ENCODE measurements at regions of chr3 and their contacts with region 1.

Region 1: GRCh38 chr3:156509189-156510174 is 45.4 kb downstream of the SSR3 start:
- DNase-seq: peak in 3 of 14 experiments; percentile 70 to 73 (median 72)
- ATAC-seq: peak; percentile 94
- H3K4me3 ChIP-seq: no peak overlapping the region
- H3K4me3 Mint-ChIP-seq: no peak overlapping the region
- H3K27ac ChIP-seq: no peak overlapping the region
- H3K27ac Mint-ChIP-seq: no peak overlapping the region
- H3K4me1 ChIP-seq: no peaks in the 10 kb centered on the region
- H3K4me1 Mint-ChIP-seq: no peaks in the 10 kb centered on the region
- H3K27me3 ChIP-seq: no peaks in the 10 kb centered on the region
- H3K27me3 Mint-ChIP-seq: peaks cover 22% of the 10 kb centered on the region
- CTCF ChIP-seq: peak; percentile 69

Region 2: DNA sequence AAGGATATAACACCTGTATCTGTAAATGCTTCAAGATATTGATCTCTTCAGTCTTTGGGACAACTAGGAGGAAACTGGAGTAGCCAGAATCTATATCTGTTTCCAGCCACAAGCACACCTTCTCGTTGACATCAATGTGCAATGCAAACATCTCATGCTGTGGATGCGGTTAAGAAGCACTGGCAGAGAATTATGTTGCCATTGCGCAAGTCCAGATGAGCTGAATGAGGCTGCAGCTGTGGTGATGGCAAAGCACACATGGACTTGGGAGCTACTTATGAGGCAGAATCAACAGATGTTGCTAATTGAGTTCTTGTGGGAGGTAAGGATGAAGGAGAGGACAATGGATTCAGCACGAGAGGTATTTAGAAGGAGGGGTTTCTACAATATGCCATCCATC is 1306.9 kb before region 1 on chr3:
- CTCF ChIA-PET with region 1: no interaction called
- POLR2A ChIA-PET with region 1: no interaction called
- intact Hi-C with region 1: no loop called
- DNase-seq: no peak
- ATAC-seq: no peak
- H3K4me3 ChIP-seq: no peak overlapping the region
- H3K4me3 Mint-ChIP-seq: no peak overlapping the region
- H3K27ac ChIP-seq: no peak overlapping the region
- H3K27ac Mint-ChIP-seq: no peak overlapping the region
- H3K4me1 ChIP-seq: no peaks in the 10 kb centered on the region
- H3K4me1 Mint-ChIP-seq: no peaks in the 10 kb centered on the region
- H3K27me3 ChIP-seq: no peaks in the 10 kb centered on the region
- H3K27me3 Mint-ChIP-seq: no peaks in the 10 kb centered on the region
- CTCF ChIP-seq: no peak

Region 3: DNA sequence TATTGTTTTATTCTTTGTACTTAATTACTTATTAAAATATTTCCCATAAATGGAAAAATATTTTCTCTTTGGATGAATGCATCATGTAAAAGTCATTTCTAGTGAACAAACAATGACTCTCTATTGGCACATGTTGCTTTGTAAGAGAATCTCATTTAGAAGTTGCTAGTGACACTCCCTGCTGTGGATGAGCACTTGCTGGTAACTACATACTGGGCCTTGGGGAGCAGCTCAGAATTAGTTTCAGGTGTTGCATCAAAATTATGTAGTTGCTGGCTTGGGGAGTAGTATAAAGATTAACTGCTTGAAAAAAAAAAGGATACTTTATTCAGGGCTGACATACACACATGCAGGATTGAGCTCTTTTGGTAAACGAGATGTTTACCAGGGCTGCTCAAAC is 469.4 kb before region 1 on chr3:
- CTCF ChIA-PET with region 1: no interaction called
- POLR2A ChIA-PET with region 1: no interaction called
- intact Hi-C with region 1: loop called (anchors 10 kb)
- DNase-seq: no peak
- ATAC-seq: no peak
- H3K4me3 ChIP-seq: no peak overlapping the region
- H3K4me3 Mint-ChIP-seq: no peak overlapping the region
- H3K27ac ChIP-seq: no peak overlapping the region
- H3K27ac Mint-ChIP-seq: no peak overlapping the region
- H3K4me1 ChIP-seq: no peaks in the 10 kb centered on the region
- H3K4me1 Mint-ChIP-seq: no peaks in the 10 kb centered on the region
- H3K27me3 ChIP-seq: no peaks in the 10 kb centered on the region
- H3K27me3 Mint-ChIP-seq: peaks cover 3% of the 10 kb centered on the region
- CTCF ChIP-seq: no peak

Region 4: DNA sequence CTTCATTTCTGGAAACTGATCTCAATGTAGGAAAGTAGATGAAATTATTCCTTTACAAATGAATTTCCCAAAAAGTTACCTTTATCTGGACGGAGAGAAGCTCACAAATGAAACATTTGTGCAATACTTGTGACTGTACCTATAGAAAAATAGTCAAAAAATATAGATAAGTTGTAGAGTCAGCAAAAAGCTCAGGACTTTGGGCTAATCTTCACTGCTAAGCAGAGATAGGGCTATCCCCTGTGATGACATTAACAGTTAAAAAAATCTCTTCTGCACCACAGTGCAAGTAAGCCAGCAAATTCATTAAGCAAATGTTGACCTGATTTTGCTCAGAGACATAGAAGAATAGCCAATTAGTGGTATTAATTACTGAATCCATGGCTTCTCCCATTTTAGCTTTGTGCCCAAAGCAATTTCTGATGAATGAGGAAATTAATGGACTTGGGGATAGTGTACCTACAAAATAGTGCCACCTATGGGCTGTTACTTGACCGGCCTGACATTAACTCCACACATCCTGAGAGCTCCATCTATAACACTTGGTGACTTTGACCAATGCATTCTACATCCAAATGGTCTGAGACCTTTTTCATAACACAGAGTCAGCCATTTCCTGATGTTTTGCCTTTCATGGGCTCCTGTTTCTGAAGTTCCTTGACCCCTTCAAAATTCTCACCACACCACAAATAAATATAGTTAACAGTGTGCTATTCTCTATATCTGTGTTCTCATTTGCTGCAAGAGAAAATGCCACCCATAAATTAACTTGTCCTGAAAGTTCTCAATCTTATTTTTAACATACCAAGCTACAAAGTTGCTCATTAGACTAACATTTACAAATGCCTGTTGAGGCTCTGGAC is 59.5 kb before region 1 on chr3:
- CTCF ChIA-PET with region 1: interaction called, 3 read pairs
- POLR2A ChIA-PET with region 1: no interaction called
- intact Hi-C with region 1: loop called (anchors 1 kb)
- DNase-seq: peak in 3 of 14 experiments; percentile 8 to 21 (median 18)
- ATAC-seq: no peak
- H3K4me3 ChIP-seq: no peak overlapping the region
- H3K4me3 Mint-ChIP-seq: no peak overlapping the region
- H3K27ac ChIP-seq: no peak overlapping the region
- H3K27ac Mint-ChIP-seq: no peak overlapping the region
- H3K4me1 ChIP-seq: no peaks in the 10 kb centered on the region
- H3K4me1 Mint-ChIP-seq: no peaks in the 10 kb centered on the region
- H3K27me3 ChIP-seq: peaks cover 2 to 4% of the 10 kb centered on the region in 2 experiments
- H3K27me3 Mint-ChIP-seq: peaks cover 31% of the 10 kb centered on the region
- CTCF ChIP-seq: peak; percentile 39

Region 5: DNA sequence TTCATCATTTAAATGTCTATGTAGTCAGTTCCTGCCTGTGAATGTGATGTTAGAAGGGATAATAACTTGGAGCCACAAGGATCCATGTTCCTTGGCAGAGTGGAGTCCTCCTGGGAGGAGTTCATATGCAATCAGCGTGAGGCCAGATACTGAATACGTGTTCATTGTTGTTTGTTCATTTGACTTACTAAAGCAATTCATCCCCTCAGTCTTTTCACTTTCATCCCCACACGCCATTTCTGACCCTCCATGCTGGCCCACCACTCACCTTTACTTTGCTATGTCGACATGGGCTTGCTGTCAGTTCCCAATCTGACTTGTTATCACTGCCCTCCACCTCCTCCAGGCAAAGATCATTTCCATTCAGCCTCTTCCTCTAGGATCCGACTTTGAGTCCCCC is 46.4 kb before region 1 on chr3:
- CTCF ChIA-PET with region 1: no interaction called
- POLR2A ChIA-PET with region 1: no interaction called
- intact Hi-C with region 1: no loop called
- DNase-seq: no peak
- ATAC-seq: no peak
- H3K4me3 ChIP-seq: no peak overlapping the region
- H3K4me3 Mint-ChIP-seq: no peak overlapping the region
- H3K27ac ChIP-seq: no peak overlapping the region
- H3K27ac Mint-ChIP-seq: no peak overlapping the region
- H3K4me1 ChIP-seq: no peaks in the 10 kb centered on the region
- H3K4me1 Mint-ChIP-seq: no peaks in the 10 kb centered on the region
- H3K27me3 ChIP-seq: no peaks in the 10 kb centered on the region
- H3K27me3 Mint-ChIP-seq: peaks cover 6% of the 10 kb centered on the region
- CTCF ChIP-seq: no peak

Region 6: DNA sequence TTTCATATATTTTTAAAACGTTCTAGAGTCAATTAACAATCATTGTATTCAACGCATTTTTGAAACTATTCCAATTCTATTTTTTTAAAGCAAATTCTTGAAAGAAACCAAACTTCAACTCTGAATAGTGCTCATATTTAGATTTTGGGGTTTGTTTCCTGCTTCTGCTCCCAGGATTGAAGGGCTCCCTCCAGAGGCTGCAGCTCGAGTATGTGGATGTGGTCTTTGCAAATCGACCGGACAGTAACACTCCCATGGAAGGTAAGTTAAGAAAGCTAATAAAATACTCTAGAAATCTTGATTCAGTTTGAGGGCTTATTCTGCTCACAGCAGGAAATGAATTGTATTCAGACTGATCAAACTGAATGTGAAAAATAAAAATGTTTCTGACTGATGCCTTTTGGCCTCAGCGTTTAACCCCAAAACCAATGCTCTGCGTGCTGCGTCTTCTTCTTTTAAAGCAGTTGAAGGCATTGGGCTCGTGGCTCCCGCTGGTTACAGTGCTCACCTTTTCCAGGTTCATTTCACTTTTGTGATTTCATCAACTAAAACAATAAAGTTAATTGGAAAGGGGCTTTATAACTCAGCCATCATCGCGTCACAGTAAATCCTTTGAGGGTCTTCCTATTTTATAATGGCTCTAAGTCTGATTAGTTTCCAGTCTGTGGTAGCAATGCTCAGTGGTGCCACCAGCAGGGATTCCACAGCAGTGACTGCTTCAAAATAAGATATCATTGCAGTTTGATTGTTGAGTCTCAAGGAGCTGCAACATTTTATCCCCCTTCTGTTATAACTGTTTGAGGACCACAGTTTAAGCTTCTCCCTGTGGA is 34.7 kb before region 1 on chr3:
- CTCF ChIA-PET with region 1: interaction called, 3 read pairs
- POLR2A ChIA-PET with region 1: no interaction called
- intact Hi-C with region 1: loop called (anchors 1 to 2 kb)
- DNase-seq: peak in 3 of 14 experiments; percentile 8 to 24 (median 24)
- ATAC-seq: no peak
- H3K4me3 ChIP-seq: no peak overlapping the region
- H3K4me3 Mint-ChIP-seq: no peak overlapping the region
- H3K27ac ChIP-seq: no peak overlapping the region
- H3K27ac Mint-ChIP-seq: no peak overlapping the region
- H3K4me1 ChIP-seq: no peaks in the 10 kb centered on the region
- H3K4me1 Mint-ChIP-seq: no peaks in the 10 kb centered on the region
- H3K27me3 ChIP-seq: no peaks in the 10 kb centered on the region
- H3K27me3 Mint-ChIP-seq: peaks cover 27% of the 10 kb centered on the region
- CTCF ChIP-seq: no peak

Region 7: GRCh38 chr3:156483961-156484787 is 25.3 kb before region 1 on chr3:
- CTCF ChIA-PET with region 1: interaction called, 7 read pairs
- POLR2A ChIA-PET with region 1: interaction called, 23 read pairs
- intact Hi-C with region 1: no loop called
- DNase-seq: peak; percentile 10 to 86 (median 36)
- ATAC-seq: peak; percentile 84
- H3K4me3 ChIP-seq: peak overlapping the region; percentile 31
- H3K4me3 Mint-ChIP-seq: peak overlapping the region; percentile 20
- H3K27ac ChIP-seq: peak overlapping the region; percentile 66 to 75
- H3K27ac Mint-ChIP-seq: peak overlapping the region; percentile 80
- H3K4me1 ChIP-seq: peaks cover 16% of the 10 kb centered on the region
- H3K4me1 Mint-ChIP-seq: peaks cover 40% of the 10 kb centered on the region
- H3K27me3 ChIP-seq: no peaks in the 10 kb centered on the region
- H3K27me3 Mint-ChIP-seq: no peaks in the 10 kb centered on the region
- CTCF ChIP-seq: no peak

Region 8: DNA sequence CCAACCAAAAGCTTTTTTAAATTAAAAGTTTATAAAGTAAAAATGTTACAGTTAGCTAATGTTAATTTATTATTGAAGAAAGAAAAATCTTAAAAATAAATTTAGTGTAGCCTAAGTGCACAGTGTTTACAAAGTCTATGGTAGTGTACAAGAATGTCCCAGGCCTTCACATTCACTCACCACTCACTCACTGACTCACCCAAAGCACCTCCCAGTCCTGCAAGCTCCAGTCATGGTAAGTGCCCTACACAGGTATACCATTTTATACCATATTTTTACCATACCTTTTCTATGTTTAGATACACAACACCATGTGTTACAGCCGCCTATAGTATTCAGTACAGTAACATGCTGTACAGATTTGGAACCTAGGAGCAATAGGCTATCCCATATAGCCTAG is 16.3 kb after region 1 on chr3:
- CTCF ChIA-PET with region 1: interaction called, 12 read pairs
- POLR2A ChIA-PET with region 1: interaction called, 3 read pairs
- intact Hi-C with region 1: no loop called
- DNase-seq: no peak
- ATAC-seq: no peak
- H3K4me3 ChIP-seq: no peak overlapping the region
- H3K4me3 Mint-ChIP-seq: no peak overlapping the region
- H3K27ac ChIP-seq: no peak overlapping the region
- H3K27ac Mint-ChIP-seq: no peak overlapping the region
- H3K4me1 ChIP-seq: peaks cover 11% of the 10 kb centered on the region
- H3K4me1 Mint-ChIP-seq: peaks cover 13% of the 10 kb centered on the region
- H3K27me3 ChIP-seq: no peaks in the 10 kb centered on the region
- H3K27me3 Mint-ChIP-seq: peaks cover 41% of the 10 kb centered on the region
- CTCF ChIP-seq: no peak